Esophagus muscularis mucosa (tissue), 4 donors: ENCODE measurements at regions of chr21 and their contacts with region 1.

Region 1: GRCh38 chr21:15729674-15730483 is at the start of gene USP25:
- DNase-seq: peak; percentile 97
- H3K4me3 ChIP-seq: peak within 1 kb of the TSS; percentile 80 to 93 (median 87)
- H3K27ac ChIP-seq: peak within 1 kb of the TSS; percentile 94 to 97 (median 96)
- H3K4me1 ChIP-seq: peaks cover 15 to 42% (median 37%) of the 10 kb centered on the region in 4 donors
- H3K27me3 ChIP-seq: no peaks in the 10 kb centered on the region
- CTCF ChIP-seq: peak in 2 of 3 experiments; percentile 20 to 35
- EP300 ChIP-seq: no peak
- POLR2A ChIP-seq: no peak
- total RNA-seq, gene USP25: 48.2 to 75.1 (median 60.0) TPM

Region 2: GRCh38 chr21:15815285-15815684 is 85.4 kb after region 1 on chr21:
- intact Hi-C with region 1: loop called (anchors 5 kb)
- DNase-seq: no peak
- H3K4me3 ChIP-seq: no peak overlapping the region
- H3K27ac ChIP-seq: no peak overlapping the region
- H3K4me1 ChIP-seq: no peaks in the 10 kb centered on the region
- H3K27me3 ChIP-seq: no peaks in the 10 kb centered on the region
- CTCF ChIP-seq: no peak
- EP300 ChIP-seq: no peak
- POLR2A ChIP-seq: no peak

Region 3: GRCh38 chr21:15837603-15838002 is 107.7 kb after region 1 on chr21:
- intact Hi-C with region 1: loop called (anchors 5 kb)
- DNase-seq: no peak
- H3K4me3 ChIP-seq: peak overlapping the region in 2 of 4 donors; percentile 18 to 21
- H3K27ac ChIP-seq: peak overlapping the region; percentile 57 to 81 (median 64)
- H3K4me1 ChIP-seq: peaks cover 8 to 29% (median 25%) of the 10 kb centered on the region in 4 donors
- H3K27me3 ChIP-seq: no peaks in the 10 kb centered on the region
- CTCF ChIP-seq: no peak
- EP300 ChIP-seq: no peak
- POLR2A ChIP-seq: no peak

Region 4: DNA sequence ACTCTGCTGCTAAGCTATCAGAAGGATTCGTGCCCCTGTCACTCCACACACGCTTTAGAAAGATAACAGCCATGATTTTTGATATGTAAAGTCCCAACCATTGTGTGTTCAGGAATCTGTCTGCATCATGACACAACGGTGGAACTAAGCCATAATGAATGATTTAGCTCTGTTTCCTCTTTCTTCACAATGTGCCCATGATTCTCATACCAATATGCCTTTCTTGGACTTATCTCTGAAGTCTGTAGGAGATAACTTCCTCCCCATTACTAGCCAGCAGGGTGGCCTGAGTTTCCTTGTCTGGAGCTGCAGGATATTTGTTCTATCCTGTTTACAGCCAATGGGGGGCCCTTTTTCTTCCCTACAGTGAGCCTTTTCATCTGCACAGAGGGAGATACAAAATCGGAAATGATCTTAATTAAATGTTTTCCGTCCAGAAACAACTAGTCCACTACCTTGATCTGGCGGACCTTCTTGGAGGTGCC is 511.6 kb after region 1 on chr21:
- intact Hi-C with region 1: no loop called
- DNase-seq: no peak
- H3K4me3 ChIP-seq: no peak overlapping the region
- H3K27ac ChIP-seq: no peak overlapping the region
- H3K4me1 ChIP-seq: no peaks in the 10 kb centered on the region
- H3K27me3 ChIP-seq: no peaks in the 10 kb centered on the region
- CTCF ChIP-seq: no peak
- EP300 ChIP-seq: no peak
- POLR2A ChIP-seq: no peak